Right ventricle myocardium superior (tissue), 1 donor: ENCODE measurements at regions of chr6 and their contacts with region 1.

Region 1: GRCh38 chr6:55276745-55277530 is 50.3 kb upstream of the GFRAL start:
- DNase-seq: peak; percentile 52
- ATAC-seq: peak; percentile 93

Region 2: GRCh38 chr6:55034752-55035151 is 242.2 kb before region 1 on chr6:
- intact Hi-C with region 1: no loop called
- DNase-seq: no peak
- ATAC-seq: no peak

Region 3: GRCh38 chr6:55886185-55886836 is 609.4 kb after region 1 on chr6:
- intact Hi-C with region 1: loop called (anchors 5 kb)
- DNase-seq: no peak
- ATAC-seq: no peak

Region 4: GRCh38 chr6:55953335-55953734 is 676.4 kb after region 1 on chr6:
- intact Hi-C with region 1: loop called (anchors 10 kb)
- DNase-seq: no peak
- ATAC-seq: peak; percentile 87

Region 5: DNA sequence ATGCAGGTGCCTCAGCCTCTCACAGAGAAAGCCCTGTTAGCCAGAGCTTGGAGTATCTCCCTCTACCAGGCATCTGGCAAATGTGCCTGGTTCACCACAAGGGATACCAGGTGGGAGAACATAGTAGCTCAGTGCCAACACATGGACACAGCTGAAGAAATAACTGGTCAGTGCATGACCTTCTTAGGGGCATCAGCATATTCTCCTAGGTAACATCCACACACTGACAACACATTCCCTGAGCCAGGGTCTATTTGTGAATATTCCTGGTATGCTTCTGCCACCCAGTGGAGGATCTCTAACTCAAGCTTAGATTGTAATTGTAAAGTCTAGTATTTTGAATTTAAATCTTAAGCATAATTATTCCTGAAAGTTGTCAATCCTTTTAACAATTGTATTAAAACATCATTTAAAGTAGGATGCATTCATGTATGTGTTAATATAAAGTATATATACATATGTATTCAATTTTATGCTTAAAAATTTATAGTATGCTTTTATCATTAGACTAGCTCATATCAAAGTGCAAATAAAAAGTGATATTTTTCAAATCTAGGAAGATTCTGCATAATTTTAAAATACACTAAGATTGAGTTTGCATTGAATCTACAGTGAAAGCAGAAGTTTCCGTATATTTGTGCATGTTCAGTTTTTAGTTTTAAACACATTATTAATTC is 1015.7 kb after region 1 on chr6:
- intact Hi-C with region 1: loop called (anchors 5 kb)
- DNase-seq: no peak
- ATAC-seq: peak; percentile 92